CD8-positive, alpha-beta T cell (primary cell): ENCODE measurements at regions of chr19 and their contacts with region 1.

Region 1: DNA sequence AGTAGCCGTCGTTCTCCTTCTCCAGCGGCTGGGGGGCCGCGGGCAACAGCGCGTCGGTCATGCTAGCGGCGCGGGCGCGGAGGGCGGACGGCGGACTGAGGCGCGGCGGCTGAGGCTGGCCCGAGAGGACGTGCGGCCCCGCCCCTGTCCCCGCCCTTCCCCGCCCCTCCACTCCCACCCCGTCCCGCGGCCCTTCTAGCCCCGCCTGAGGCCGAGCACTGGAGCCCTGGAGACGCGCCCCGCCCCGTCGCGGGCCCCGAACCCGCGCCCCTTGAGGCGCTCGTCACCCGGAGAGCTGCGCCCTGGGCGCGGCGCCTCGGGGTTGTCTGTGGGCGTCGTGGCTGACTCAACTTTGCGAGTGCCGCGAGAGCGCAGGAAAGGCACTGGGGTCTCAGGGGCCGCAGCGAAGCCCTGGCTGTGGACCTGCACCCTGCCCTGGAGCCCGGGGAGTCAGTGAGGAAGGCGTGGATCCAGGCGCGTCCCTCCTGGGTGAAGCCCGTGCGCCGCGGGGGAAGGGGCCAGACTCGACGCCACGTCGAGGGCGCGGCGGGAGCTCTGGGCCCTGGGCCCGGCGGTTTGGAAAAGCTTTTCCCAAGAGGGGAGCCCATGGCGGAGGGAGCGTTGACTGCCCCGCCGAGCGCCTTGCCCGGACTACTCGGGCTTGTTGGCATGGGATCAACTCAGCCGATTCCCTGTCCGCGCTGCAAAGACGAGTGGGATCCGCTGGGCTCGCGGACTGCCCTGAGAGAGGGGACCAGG is at the start of gene RHPN2:
- DNase-seq: peak in 7 of 9 experiments; percentile 3 to 59 (median 32)
- ATAC-seq: peak; percentile 78
- H3K4me3 ChIP-seq: peak within 1 kb of the TSS in 1 of 2 experiments; percentile 12
- H3K4me3 Mint-ChIP-seq: peak within 1 kb of the TSS; percentile 74
- H3K27ac ChIP-seq: no peak within 1 kb of the TSS
- H3K27ac Mint-ChIP-seq: no peak within 1 kb of the TSS
- H3K4me1 ChIP-seq: peaks cover 3% of the 10 kb centered on the region
- H3K4me1 Mint-ChIP-seq: peaks cover 7% of the 10 kb centered on the region
- H3K27me3 ChIP-seq: peaks cover 5 to 6% of the 10 kb centered on the region in 2 experiments
- H3K27me3 Mint-ChIP-seq: peaks cover 22% of the 10 kb centered on the region
- CTCF ChIP-seq: no peak
- total RNA-seq, gene RHPN2: 0.61 TPM in 1 of 2 experiments, not detected in the other

Region 2: GRCh38 chr19:31761281-31761913 is 1303.6 kb before region 1 on chr19:
- CTCF ChIA-PET with region 1: no interaction called
- POLR2A ChIA-PET with region 1: no interaction called
- intact Hi-C with region 1: no loop called
- DNase-seq: no peak
- ATAC-seq: no peak
- H3K4me3 ChIP-seq: no peak overlapping the region
- H3K4me3 Mint-ChIP-seq: no peak overlapping the region
- H3K27ac ChIP-seq: no peak overlapping the region
- H3K27ac Mint-ChIP-seq: no peak overlapping the region
- H3K4me1 ChIP-seq: no peaks in the 10 kb centered on the region
- H3K4me1 Mint-ChIP-seq: no peaks in the 10 kb centered on the region
- H3K27me3 ChIP-seq: peaks cover 0 to 3% of the 10 kb centered on the region in 2 experiments
- H3K27me3 Mint-ChIP-seq: no peaks in the 10 kb centered on the region
- CTCF ChIP-seq: no peak

Region 3: DNA sequence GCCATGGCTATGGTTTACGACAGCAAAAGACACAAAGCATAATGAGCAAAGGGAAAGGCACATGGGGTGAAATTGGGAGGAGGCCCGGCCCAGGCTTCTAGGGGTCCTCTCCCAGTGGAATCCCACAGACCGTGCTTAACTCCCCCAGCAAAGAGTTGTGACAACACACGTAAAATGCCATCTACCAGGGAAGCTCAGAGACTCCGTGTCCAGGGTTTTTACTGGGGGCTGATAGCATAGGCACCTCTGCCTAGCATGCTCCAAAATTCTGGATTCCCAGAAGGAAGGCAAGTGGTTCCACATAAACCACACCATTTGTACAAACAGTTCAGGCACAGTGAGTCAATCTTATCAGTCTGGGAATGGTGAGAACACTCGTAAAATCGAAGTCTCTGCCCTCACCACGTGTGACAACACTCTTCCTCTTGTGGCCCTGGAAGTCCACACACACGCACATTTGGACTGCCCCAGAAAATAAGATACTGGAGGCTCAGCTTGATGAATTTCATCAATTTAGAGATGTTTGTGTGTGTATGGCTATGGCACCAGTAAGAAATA is 35.1 kb before region 1 on chr19:
- CTCF ChIA-PET with region 1: no interaction called
- POLR2A ChIA-PET with region 1: no interaction called
- intact Hi-C with region 1: no loop called
- DNase-seq: no peak
- ATAC-seq: no peak
- H3K4me3 ChIP-seq: no peak overlapping the region
- H3K4me3 Mint-ChIP-seq: no peak overlapping the region
- H3K27ac ChIP-seq: no peak overlapping the region
- H3K27ac Mint-ChIP-seq: no peak overlapping the region
- H3K4me1 ChIP-seq: no peaks in the 10 kb centered on the region
- H3K4me1 Mint-ChIP-seq: no peaks in the 10 kb centered on the region
- H3K27me3 ChIP-seq: no peaks in the 10 kb centered on the region
- H3K27me3 Mint-ChIP-seq: no peaks in the 10 kb centered on the region
- CTCF ChIP-seq: no peak

Region 4: DNA sequence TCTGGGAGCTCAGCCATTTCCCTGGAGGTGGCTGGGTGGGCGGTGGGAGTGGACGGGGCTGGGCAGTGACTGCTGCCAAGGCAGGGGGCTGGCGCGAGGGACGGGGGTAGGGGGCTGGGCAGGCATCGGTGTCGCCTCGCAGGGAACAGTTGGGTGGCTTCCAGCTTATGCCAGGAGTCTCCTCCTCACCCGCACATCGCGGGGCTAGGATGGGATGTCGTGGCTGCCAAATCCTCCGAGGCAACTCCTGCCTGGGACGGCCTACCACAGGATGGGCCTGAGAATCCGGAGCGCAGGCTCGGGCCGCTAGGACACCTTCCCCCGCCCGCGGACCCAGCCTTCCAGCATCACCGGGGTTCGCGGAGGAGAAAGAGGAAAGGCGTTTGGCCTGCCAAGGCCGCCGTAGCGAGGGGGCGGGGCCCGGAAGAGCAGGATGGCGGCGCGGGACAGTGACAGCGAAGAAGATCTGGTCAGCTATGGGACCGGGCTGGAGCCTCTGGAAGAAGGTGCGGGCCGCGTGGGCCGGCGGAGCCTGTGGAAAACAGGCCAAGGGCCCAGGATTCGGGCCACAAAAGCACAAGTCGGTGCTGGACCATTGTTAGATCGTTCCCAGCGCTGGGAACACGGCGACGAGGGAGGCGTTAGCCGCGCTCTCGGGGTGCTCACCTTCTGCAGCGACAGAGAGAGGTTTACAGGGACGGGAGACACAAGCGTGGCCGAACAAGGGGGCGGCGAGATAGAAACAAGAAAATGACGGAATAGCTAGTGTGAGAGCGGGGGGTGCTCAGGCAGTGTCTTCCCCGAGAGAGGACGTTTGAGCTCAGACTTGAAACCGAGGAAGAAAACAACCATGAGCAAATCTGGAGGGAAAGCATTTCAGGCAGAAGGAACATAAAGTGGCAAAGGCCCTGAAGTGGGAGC is 16.1 kb after region 1 on chr19 and contains the start of gene GPATCH1:
- CTCF ChIA-PET with region 1: no interaction called
- POLR2A ChIA-PET with region 1: no interaction called
- intact Hi-C with region 1: loop called in 1 of 2 experiments (anchors 1 kb)
- DNase-seq: peak; percentile 66 to 89 (median 81)
- ATAC-seq: peak; percentile 96
- H3K4me3 ChIP-seq: peak within 1 kb of the TSS; percentile 76 to 79
- H3K4me3 Mint-ChIP-seq: peak within 1 kb of the TSS; percentile 96
- H3K27ac ChIP-seq: peak within 1 kb of the TSS; percentile 62 to 80
- H3K27ac Mint-ChIP-seq: peak within 1 kb of the TSS; percentile 97
- H3K4me1 ChIP-seq: peaks cover 9% of the 10 kb centered on the region
- H3K4me1 Mint-ChIP-seq: peaks cover 30% of the 10 kb centered on the region
- H3K27me3 ChIP-seq: no peaks in the 10 kb centered on the region
- H3K27me3 Mint-ChIP-seq: no peaks in the 10 kb centered on the region
- CTCF ChIP-seq: no peak
- total RNA-seq, gene GPATCH1: 4.9 to 5.2 TPM